Activated CD4-positive, alpha-beta memory T cell treated with anti-CD3 and anti-CD28 coated beads for 36 hours (primary cell): ENCODE measurements at regions of chr18 and their contacts with region 1.

Region 1: GRCh38 chr18:2891526-2892431 is 45.0 kb downstream of the EMILIN2 start:
- DNase-seq: peak; percentile 55
- H3K4me3 Mint-ChIP-seq: peak overlapping the region; percentile 60
- H3K27ac Mint-ChIP-seq: peak overlapping the region; percentile 77
- H3K4me1 Mint-ChIP-seq: peaks cover 42% of the 10 kb centered on the region
- H3K27me3 Mint-ChIP-seq: no peaks in the 10 kb centered on the region

Region 2: GRCh38 chr18:2881088-2881839 is 10.5 kb before region 1 on chr18:
- CTCF ChIA-PET with region 1: interaction called, 3 read pairs
- POLR2A ChIA-PET with region 1: no interaction called
- intact Hi-C with region 1: loop called (anchors 1 kb)
- DNase-seq: peak; percentile 25
- H3K4me3 Mint-ChIP-seq: peak overlapping the region; percentile 73
- H3K27ac Mint-ChIP-seq: peak overlapping the region; percentile 83
- H3K4me1 Mint-ChIP-seq: peaks cover 28% of the 10 kb centered on the region
- H3K27me3 Mint-ChIP-seq: no peaks in the 10 kb centered on the region